Heart left ventricle (tissue), 16 donors: ENCODE measurements at regions of chr7 and their contacts with region 1.

Region 1: GRCh38 chr7:25851332-25852210 is 300.4 kb upstream of the NFE2L3 start:
- DNase-seq: peak; percentile 77 to 87 (median 81)
- ATAC-seq: peak; percentile 71 to 80 (median 79)
- H3K4me3 ChIP-seq: peak overlapping the region in 6 of 12 donors; percentile 3 to 45 (median 14)
- H3K27ac ChIP-seq: peak overlapping the region in 9 of 12 donors; percentile 20 to 87 (median 73)
- H3K4me1 ChIP-seq: peaks cover 0 to 63% (median 32%) of the 10 kb centered on the region in 12 donors
- H3K27me3 ChIP-seq: peaks cover 13 to 70% (median 49%) of the 10 kb centered on the region in 9 donors
- CTCF ChIP-seq: peak; percentile 73 to 86 (median 82)
- POLR2A ChIP-seq: no peak

Region 2: DNA sequence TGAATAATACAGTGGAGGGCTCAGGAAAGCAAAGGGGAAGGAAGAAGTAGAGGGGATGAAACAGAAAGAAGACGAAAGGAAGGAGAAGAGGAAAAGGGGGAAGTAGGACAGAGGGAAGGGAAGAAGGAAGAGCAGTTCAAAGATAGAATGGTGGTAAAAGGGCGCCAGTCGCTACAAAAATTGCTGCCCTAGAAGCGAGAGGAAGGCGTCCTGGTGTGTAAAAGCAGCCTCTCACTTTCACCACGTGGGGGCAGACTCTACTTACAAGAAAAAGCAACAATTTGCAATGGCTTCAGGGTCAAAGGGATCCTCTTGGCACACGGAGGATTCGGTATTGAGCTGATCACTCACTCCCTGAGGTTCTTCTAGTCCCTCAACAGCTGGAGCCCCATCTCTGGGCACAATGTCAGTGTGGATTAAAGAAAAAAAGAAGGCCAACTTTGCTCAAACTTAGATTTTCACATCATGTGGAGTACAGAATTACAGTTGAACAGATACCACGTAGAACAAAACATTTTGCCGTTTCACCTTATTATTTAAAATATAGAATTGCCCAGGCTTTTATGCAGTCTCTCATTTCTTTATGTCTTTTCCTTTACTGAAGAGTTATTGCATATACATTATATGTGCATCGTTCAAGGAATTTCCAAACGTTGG is 591.9 kb before region 1 on chr7:
- intact Hi-C with region 1: loop called in 9 of 10 experiments (anchors 1 to 5 kb)
- DNase-seq: peak in 4 of 5 donors; percentile 45 to 61 (median 49)
- ATAC-seq: peak in 3 of 4 donors; percentile 67 to 87 (median 73)
- H3K4me3 ChIP-seq: no peak overlapping the region
- H3K27ac ChIP-seq: no peak overlapping the region
- H3K4me1 ChIP-seq: peaks cover 0 to 23% (median 2%) of the 10 kb centered on the region in 12 donors
- H3K27me3 ChIP-seq: peaks cover 0 to 12% (median 0%) of the 10 kb centered on the region in 9 donors
- CTCF ChIP-seq: peak; percentile 66 to 88 (median 78)
- POLR2A ChIP-seq: no peak

Region 3: DNA sequence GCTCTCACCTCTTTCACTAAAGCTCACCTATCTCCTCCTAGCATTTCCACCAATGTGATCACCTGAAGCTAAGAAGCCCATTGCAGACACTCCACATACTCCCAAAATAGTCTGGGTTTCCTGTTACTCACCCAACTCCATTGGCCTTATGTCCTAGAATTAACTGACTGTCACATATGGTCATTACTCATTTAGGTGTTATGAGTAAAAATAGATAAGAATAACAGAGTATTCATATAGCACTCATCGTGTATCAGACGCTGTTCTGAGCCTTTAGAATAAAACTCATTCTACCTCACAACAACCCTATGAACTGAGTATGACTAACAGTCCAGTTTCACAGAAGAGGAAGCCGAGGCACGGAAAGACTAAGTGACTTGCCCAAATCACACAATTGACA is 449.0 kb before region 1 on chr7:
- intact Hi-C with region 1: loop called in 1 of 10 experiments (anchors 5 kb)
- DNase-seq: no peak
- ATAC-seq: no peak
- H3K4me3 ChIP-seq: no peak overlapping the region
- H3K27ac ChIP-seq: no peak overlapping the region
- H3K4me1 ChIP-seq: no peaks in the 10 kb centered on the region
- H3K27me3 ChIP-seq: no peaks in the 10 kb centered on the region
- CTCF ChIP-seq: no peak
- POLR2A ChIP-seq: no peak

Region 4: GRCh38 chr7:25574828-25575227 is 276.7 kb before region 1 on chr7:
- intact Hi-C with region 1: loop called in 1 of 10 experiments (anchors 5 kb)
- DNase-seq: no peak
- ATAC-seq: no peak
- H3K4me3 ChIP-seq: no peak overlapping the region
- H3K27ac ChIP-seq: peak overlapping the region in 1 of 12 donors; percentile 15
- H3K4me1 ChIP-seq: peaks cover 0 to 20% (median 0%) of the 10 kb centered on the region in 12 donors
- H3K27me3 ChIP-seq: peaks cover 0 to 4% (median 0%) of the 10 kb centered on the region in 9 donors
- CTCF ChIP-seq: no peak
- POLR2A ChIP-seq: no peak

Region 5: DNA sequence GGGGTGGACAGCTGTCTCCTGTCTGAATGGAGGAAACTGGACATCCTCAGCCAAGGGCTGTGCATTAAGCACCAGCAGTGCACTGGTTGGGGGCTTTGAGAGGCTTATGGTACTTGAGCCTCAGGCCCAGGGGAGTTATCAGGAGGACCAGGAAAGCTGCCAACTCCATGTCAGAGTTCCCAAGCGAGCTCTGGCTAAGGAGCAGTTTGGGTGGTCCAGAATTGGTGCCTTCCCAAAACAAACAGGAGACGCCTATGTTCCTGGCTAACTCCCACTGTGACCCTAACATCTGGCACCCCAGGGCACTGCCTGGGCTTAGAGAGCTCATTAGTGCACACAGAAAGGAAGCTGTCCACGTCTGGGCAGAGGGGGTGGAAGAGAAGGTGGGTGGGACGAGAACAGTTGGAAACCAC is 214.7 kb before region 1 on chr7:
- intact Hi-C with region 1: loop called in 1 of 10 experiments (anchors 10 kb)
- DNase-seq: peak in 4 of 5 donors; percentile 35 to 70 (median 54)
- ATAC-seq: peak; percentile 49 to 78 (median 72)
- H3K4me3 ChIP-seq: no peak overlapping the region
- H3K27ac ChIP-seq: peak overlapping the region in 7 of 12 donors; percentile 3 to 62 (median 31)
- H3K4me1 ChIP-seq: peaks cover 0 to 27% (median 9%) of the 10 kb centered on the region in 12 donors
- H3K27me3 ChIP-seq: no peaks in the 10 kb centered on the region
- CTCF ChIP-seq: no peak
- POLR2A ChIP-seq: no peak

Region 6: GRCh38 chr7:25720427-25720826 is 131.1 kb before region 1 on chr7:
- intact Hi-C with region 1: loop called in 4 of 10 experiments (anchors 5 to 10 kb)
- DNase-seq: no peak
- ATAC-seq: no peak
- H3K4me3 ChIP-seq: no peak overlapping the region
- H3K27ac ChIP-seq: peak overlapping the region in 1 of 12 donors; percentile 13
- H3K4me1 ChIP-seq: peaks cover 0 to 6% (median 0%) of the 10 kb centered on the region in 12 donors
- H3K27me3 ChIP-seq: no peaks in the 10 kb centered on the region
- CTCF ChIP-seq: peak in 8 of 12 donors; percentile 11 to 47 (median 20)
- POLR2A ChIP-seq: no peak

Region 7: GRCh38 chr7:25789701-25790640 is 61.6 kb before region 1 on chr7:
- intact Hi-C with region 1: loop called in 1 of 10 experiments (anchors 10 kb)
- DNase-seq: peak in 1 of 5 donors; percentile 12
- ATAC-seq: peak in 3 of 4 donors; percentile 26 to 58 (median 43)
- H3K4me3 ChIP-seq: no peak overlapping the region
- H3K27ac ChIP-seq: peak overlapping the region in 7 of 12 donors; percentile 17 to 83 (median 55)
- H3K4me1 ChIP-seq: peaks cover 0 to 23% (median 3%) of the 10 kb centered on the region in 12 donors
- H3K27me3 ChIP-seq: no peaks in the 10 kb centered on the region
- CTCF ChIP-seq: no peak
- POLR2A ChIP-seq: no peak

Region 8: GRCh38 chr7:26265065-26265464 is 413.5 kb after region 1 on chr7:
- intact Hi-C with region 1: no loop called
- DNase-seq: no peak
- ATAC-seq: no peak
- H3K4me3 ChIP-seq: no peak overlapping the region
- H3K27ac ChIP-seq: no peak overlapping the region
- H3K4me1 ChIP-seq: no peaks in the 10 kb centered on the region
- H3K27me3 ChIP-seq: peaks cover 0 to 4% (median 0%) of the 10 kb centered on the region in 9 donors
- CTCF ChIP-seq: no peak
- POLR2A ChIP-seq: no peak